BJ (cell line): ENCODE measurements at regions of chr5 and their contacts with region 1.

Region 1: GRCh38 chr5:160439205-160439600 is 17.5 kb downstream of the PTTG1 start:
- DNase-seq: no peak
- H3K4me3 ChIP-seq: peak overlapping the region; percentile 47
- H3K27me3 ChIP-seq: peaks cover 3% of the 10 kb centered on the region; the same call in 1 of the 2 replicates
- CTCF ChIP-seq: peak; percentile 93

Region 2: GRCh38 chr5:160418561-160419457 is 20.4 kb before region 1 on chr5 and contains the start of gene SLU7:
- CTCF ChIA-PET with region 1: interaction called, 108 read pairs
- POLR2A ChIA-PET with region 1: no interaction called
- DNase-seq: peak; percentile 86
- H3K4me3 ChIP-seq: peak within 1 kb of the TSS; percentile 91
- H3K27me3 ChIP-seq: no peaks in the 10 kb centered on the region
- CTCF ChIP-seq: no peak
- polyA plus RNA-seq, gene SLU7: 12.5 and 28.2 TPM in 2 replicates

Region 3: GRCh38 chr5:160452795-160453194 is 13.6 kb after region 1 on chr5:
- CTCF ChIA-PET with region 1: interaction called, 34 read pairs
- POLR2A ChIA-PET with region 1: no interaction called
- DNase-seq: no peak
- H3K4me3 ChIP-seq: no peak overlapping the region
- H3K27me3 ChIP-seq: peaks cover 3% of the 10 kb centered on the region; the same call in 1 of the 2 replicates
- CTCF ChIP-seq: no peak

Region 4: DNA sequence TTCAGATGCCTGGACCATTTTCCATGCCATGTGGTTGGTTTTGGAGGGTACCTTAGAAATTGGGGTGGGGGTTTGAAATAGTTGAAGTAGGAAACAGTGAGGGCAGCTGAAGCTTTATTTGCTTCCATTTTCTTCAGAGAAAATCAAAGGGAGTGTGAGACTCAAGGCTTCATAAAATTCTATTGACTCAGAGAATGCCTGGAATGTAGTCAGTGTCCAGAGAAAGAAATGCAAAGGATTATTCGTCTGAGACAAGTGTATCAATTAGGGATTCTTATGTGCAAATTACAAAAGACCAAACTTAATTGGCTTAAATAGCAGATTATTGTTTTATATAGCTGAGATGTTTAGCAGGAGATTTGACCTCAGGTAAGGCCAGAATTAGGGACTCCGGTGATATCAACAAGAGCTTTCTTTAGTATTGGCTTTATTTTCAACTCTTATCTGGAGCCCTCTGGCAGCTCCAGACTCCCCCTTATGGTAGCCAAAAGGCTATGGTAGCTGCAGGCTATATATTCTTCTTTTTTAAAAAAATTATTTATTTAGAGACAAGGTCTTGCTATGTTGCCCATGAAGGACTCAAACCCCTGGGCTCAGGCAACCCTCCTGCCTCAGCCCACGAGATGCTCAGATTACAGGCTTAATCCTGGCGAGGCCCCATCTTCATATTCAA is 21.3 kb after region 1 on chr5:
- CTCF ChIA-PET with region 1: interaction called, 23 read pairs
- POLR2A ChIA-PET with region 1: no interaction called
- DNase-seq: no peak
- H3K4me3 ChIP-seq: no peak overlapping the region
- H3K27me3 ChIP-seq: no peaks in the 10 kb centered on the region
- CTCF ChIP-seq: peak; percentile 28

Region 5: DNA sequence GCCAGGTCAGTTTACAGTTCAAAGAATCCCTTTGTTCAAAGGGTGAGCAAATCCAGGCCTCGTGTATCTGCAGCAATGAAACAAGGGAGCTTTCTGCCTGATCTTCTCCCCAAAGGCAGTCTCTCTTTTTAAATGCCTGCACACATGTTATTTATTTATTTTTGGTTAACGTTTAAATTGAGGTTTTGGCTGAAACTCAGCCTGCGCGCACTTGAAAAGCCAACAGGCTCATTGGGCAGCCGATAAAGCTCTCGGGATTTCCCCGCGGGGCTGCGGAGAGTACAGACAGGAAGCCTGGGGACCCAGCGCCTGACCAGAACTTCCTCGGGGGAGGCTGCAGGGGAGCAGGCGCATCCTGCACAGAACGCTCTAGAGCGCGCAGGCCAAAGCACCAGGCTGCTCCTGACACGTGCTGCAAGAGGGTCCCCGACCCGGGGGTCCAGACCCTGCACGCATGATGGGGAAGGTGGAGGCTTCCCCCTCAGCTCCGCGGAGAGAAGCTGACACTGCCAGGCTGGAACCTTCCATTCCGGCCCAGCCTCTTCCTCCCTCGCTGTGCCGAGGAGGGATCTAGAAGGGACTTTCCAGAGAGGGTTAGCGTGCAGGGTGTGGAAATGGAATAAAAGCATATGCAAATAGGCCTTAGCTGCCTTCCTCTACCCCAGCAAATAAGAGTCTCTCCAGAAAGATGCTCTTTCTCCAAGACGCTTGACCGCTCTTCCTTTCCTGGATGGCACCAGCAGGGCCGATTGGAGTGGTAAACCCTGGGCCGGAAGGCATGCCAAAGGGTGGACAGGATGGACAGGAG is 28.6 kb after region 1 on chr5:
- CTCF ChIA-PET with region 1: interaction called, 33 read pairs
- POLR2A ChIA-PET with region 1: no interaction called
- DNase-seq: peak; percentile 68
- H3K4me3 ChIP-seq: no peak overlapping the region
- H3K27me3 ChIP-seq: no peaks in the 10 kb centered on the region
- CTCF ChIP-seq: no peak

Region 6: GRCh38 chr5:160479926-160480325 is 40.7 kb after region 1 on chr5:
- CTCF ChIA-PET with region 1: interaction called, 20 read pairs
- POLR2A ChIA-PET with region 1: no interaction called
- DNase-seq: peak; percentile 46
- H3K4me3 ChIP-seq: no peak overlapping the region
- H3K27me3 ChIP-seq: no peaks in the 10 kb centered on the region
- CTCF ChIP-seq: no peak

Region 7: DNA sequence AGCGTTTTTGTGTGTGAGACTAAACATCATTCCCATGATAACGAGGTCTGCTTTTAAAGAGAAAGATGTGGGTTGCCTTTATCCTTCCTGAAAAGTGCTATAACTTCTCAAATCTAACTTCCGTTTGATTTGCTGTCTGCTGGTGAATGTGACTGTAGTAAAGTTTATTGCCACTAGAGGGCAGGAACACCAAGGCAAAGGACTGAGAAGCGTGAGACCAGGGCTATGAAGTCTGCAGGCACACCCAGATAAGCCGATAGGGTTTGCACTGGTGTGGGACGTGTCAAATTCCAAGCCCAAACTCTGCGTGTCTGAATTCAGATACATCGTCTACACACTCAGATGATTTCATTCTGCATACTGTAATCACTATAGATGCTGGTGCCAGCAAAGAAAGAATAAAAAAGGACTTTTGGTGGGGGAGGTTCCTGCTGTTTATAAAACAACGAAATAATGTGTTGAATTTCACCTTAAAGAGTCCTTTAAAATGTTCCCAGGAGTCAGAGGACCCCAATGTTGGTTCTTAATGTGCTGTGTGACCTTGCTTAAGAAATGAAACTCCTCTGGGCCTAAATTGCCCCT is 69.7 kb after region 1 on chr5:
- CTCF ChIA-PET with region 1: interaction called, 43 read pairs
- POLR2A ChIA-PET with region 1: no interaction called
- DNase-seq: peak; percentile 39
- H3K4me3 ChIP-seq: no peak overlapping the region
- H3K27me3 ChIP-seq: peaks cover 2% of the 10 kb centered on the region; the same call in 1 of the 2 replicates
- CTCF ChIP-seq: peak; percentile 83

Region 8: GRCh38 chr5:160555961-160556631 is 116.9 kb after region 1 on chr5:
- CTCF ChIA-PET with region 1: no interaction called
- POLR2A ChIA-PET with region 1: no interaction called
- DNase-seq: no peak
- H3K4me3 ChIP-seq: no peak overlapping the region
- H3K27me3 ChIP-seq: no peaks in the 10 kb centered on the region
- CTCF ChIP-seq: no peak